ENCODE measurements at regions of chr6 and their contacts with region 1.

Region 1: DNA sequence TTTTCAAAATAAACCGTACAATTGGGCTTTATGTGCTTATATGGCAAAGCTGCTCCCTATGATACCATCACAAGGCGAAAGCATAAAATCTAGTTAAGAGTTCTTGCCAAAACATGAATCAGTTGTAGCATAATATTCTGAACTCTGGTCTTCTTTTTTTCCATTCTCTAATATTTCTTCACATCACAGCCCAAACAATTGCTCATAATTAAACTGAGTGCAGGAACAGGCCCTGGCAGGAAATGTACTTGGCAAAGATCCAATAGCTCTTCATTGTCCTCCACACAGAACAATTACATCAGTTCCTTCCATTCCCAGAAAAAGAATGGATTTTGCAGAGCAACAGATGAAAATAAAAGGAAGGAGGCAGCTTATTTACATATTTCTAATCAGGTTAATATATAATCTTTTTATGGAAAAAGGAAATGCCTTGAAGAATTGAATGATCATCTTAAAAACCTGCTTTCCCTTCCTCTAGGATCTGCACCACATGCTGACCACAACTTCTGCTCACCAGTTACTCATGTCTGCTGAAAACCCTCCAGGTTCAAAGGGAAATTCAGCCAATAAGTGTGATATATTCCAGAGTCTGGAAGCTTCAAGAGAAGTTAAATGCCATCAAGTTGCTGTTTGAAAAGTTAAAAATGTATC is 123.3 kb upstream of the COL21A1 start:
- DNase-seq: peak; percentile 93
- H3K4me3 Mint-ChIP-seq: peak overlapping the region; percentile 61
- H3K27ac Mint-ChIP-seq: peak overlapping the region; percentile 94
- H3K4me1 Mint-ChIP-seq: peaks cover 34% of the 10 kb centered on the region
- H3K27me3 Mint-ChIP-seq: no peaks in the 10 kb centered on the region
- CTCF ChIP-seq: no peak

Region 2: DNA sequence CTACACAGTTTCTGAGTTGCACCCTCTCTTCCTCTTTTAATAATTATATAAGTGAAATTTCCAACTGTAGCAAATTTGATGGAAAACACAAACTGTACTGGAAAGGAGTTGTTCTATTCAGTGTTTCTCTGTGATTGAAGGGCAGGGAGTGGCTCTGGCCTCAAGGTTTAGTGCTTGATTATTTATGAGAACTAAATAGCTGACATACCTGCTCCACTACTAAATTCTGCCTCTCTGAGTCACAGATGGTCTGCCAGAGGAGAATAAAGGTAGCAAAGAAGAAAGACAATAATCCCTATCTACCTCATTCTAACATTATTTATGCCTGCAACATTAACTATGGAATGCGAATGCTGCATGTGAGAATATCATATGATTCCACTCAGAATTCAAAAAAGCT is 504.6 kb before region 1 on chr6:
- CTCF ChIA-PET with region 1: no interaction called
- POLR2A ChIA-PET with region 1: no interaction called
- intact Hi-C with region 1: no loop called
- DNase-seq: peak; percentile 10
- H3K4me3 Mint-ChIP-seq: no peak overlapping the region
- H3K27ac Mint-ChIP-seq: no peak overlapping the region
- H3K4me1 Mint-ChIP-seq: peaks cover 40% of the 10 kb centered on the region
- H3K27me3 Mint-ChIP-seq: no peaks in the 10 kb centered on the region
- CTCF ChIP-seq: no peak

Region 3: DNA sequence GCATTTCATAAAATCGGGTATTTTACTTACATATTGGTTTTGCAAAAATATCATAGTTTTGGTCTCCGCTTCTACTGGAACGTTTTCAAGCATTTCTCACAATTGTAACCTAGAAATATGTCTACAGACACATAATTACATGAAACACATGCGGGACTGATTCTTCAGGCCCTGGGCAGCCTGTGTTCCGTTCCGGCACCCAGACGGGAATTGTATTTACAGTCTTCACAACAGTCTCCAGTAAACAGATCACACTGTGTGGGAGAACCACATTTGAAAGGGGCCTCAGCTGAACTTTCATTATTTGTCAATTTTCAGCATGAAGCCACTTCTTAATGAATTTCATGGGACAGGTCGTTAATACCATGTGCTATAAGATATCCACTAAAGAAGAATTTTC is 75.1 kb after region 1 on chr6:
- CTCF ChIA-PET with region 1: interaction called, 15 read pairs
- POLR2A ChIA-PET with region 1: interaction called, 39 read pairs
- intact Hi-C with region 1: no loop called
- DNase-seq: no peak
- H3K4me3 Mint-ChIP-seq: no peak overlapping the region
- H3K27ac Mint-ChIP-seq: no peak overlapping the region
- H3K4me1 Mint-ChIP-seq: peaks cover under 1% of the 10 kb centered on the region
- H3K27me3 Mint-ChIP-seq: no peaks in the 10 kb centered on the region
- CTCF ChIP-seq: no peak

Region 4: GRCh38 chr6:56456786-56457185 is 86.1 kb after region 1 on chr6:
- CTCF ChIA-PET with region 1: interaction called, 35 read pairs
- POLR2A ChIA-PET with region 1: interaction called, 13 read pairs
- intact Hi-C with region 1: loop called (anchors 5 kb)
- DNase-seq: no peak
- H3K4me3 Mint-ChIP-seq: no peak overlapping the region
- H3K27ac Mint-ChIP-seq: no peak overlapping the region
- H3K4me1 Mint-ChIP-seq: no peaks in the 10 kb centered on the region
- H3K27me3 Mint-ChIP-seq: no peaks in the 10 kb centered on the region
- CTCF ChIP-seq: no peak

Region 5: GRCh38 chr6:56475736-56476457 is 105.2 kb after region 1 on chr6:
- CTCF ChIA-PET with region 1: interaction called, 10 read pairs
- POLR2A ChIA-PET with region 1: interaction called, 6 read pairs
- intact Hi-C with region 1: no loop called
- DNase-seq: no peak
- H3K4me3 Mint-ChIP-seq: no peak overlapping the region
- H3K27ac Mint-ChIP-seq: no peak overlapping the region
- H3K4me1 Mint-ChIP-seq: peaks cover 8% of the 10 kb centered on the region
- H3K27me3 Mint-ChIP-seq: no peaks in the 10 kb centered on the region
- CTCF ChIP-seq: no peak

Region 6: DNA sequence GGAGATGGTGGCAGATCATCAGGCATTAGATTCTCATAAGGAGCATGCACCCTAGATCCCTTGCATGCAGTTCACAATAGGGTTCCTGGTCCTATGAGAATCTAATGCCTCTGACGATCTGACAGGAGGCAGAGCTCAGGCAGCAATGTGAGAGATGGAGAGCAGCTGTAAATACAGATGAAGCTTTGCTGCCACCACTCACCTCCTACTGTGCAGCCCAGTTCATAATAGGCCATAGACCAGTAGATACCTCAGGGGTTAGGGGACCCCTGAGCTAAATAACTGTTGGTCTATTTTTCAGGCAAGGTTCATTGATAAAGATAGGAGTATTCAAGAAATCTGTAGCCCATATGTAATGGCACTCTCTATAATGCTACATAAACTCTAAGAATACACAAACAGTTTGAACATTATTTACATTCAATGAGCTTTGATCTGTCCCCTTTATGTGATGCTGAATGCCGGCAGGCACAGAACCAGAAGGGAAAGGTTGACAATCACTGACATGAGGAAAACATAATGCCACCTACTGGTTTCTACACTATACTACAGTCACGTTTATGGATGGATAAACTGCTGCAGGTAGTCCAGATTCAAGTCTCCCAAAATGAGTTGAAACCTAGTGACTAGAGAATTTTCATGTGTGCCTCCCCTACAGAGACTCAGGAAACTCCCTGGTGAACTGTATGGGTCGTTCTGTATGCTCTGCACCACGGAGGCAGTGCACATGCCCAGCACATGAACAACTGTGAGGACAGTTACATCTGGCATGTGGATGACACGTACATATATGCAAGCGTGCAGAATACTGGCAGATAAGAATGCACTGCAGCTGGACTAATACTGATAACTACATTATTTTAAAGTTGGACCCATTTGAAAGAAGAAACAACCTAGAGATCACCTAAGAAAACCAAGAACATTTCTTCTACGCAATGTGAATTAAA is 200.0 kb after region 1 on chr6:
- CTCF ChIA-PET with region 1: interaction called, 10 read pairs
- POLR2A ChIA-PET with region 1: no interaction called
- intact Hi-C with region 1: loop called (anchors 2 kb)
- DNase-seq: peak; percentile 46
- H3K4me3 Mint-ChIP-seq: no peak overlapping the region
- H3K27ac Mint-ChIP-seq: no peak overlapping the region
- H3K4me1 Mint-ChIP-seq: no peaks in the 10 kb centered on the region
- H3K27me3 Mint-ChIP-seq: no peaks in the 10 kb centered on the region
- CTCF ChIP-seq: peak; percentile 68

Region 7: GRCh38 chr6:56851541-56852259 is 481.0 kb after region 1 on chr6:
- CTCF ChIA-PET with region 1: interaction called, 4 read pairs
- POLR2A ChIA-PET with region 1: no interaction called
- intact Hi-C with region 1: loop called (anchors 5 kb)
- DNase-seq: peak; percentile 86
- H3K4me3 Mint-ChIP-seq: peak overlapping the region; percentile 81
- H3K27ac Mint-ChIP-seq: peak overlapping the region; percentile 56
- H3K4me1 Mint-ChIP-seq: peaks cover 35% of the 10 kb centered on the region
- H3K27me3 Mint-ChIP-seq: no peaks in the 10 kb centered on the region
- CTCF ChIP-seq: peak; percentile 57

Measured in MCF 10A (cell line).